ENCODE measurements at regions of chr2 and their contacts with region 1.

Region 1: GRCh38 chr2:109333414-109334210 is 204.6 kb downstream of the SH3RF3 start:
- DNase-seq: no peak
- ATAC-seq: 0 out of 2 replicates have a peak, but pooled peaks have one; percentile 47
- H3K4me3 ChIP-seq: no peak overlapping the region
- H3K27ac ChIP-seq: no peak overlapping the region
- H3K4me1 ChIP-seq: peaks cover 12% of the 10 kb centered on the region
- H3K27me3 ChIP-seq: no peaks in the 10 kb centered on the region
- CTCF ChIP-seq: no peak; the same call in 1 of the 2 replicates

Region 2: GRCh38 chr2:109322641-109323040 is 11.0 kb before region 1 on chr2:
- CTCF ChIA-PET with region 1: no interaction called
- POLR2A ChIA-PET with region 1: interaction called, 16 read pairs
- in situ Hi-C with region 1: no loop called
- intact Hi-C with region 1: no loop called
- DNase-seq: no peak
- ATAC-seq: no peak
- H3K4me3 ChIP-seq: no peak overlapping the region
- H3K27ac ChIP-seq: no peak overlapping the region
- H3K4me1 ChIP-seq: no peaks in the 10 kb centered on the region; the same call in 1 of the 2 replicates
- H3K27me3 ChIP-seq: 0 out of 2 replicates have a peak, but pooled peaks cover 2% of the 10 kb centered on the region
- CTCF ChIP-seq: no peak

Region 3: GRCh38 chr2:110732422-110733413 is 1399.1 kb after region 1 on chr2 and contains the start of gene ACOXL:
- CTCF ChIA-PET with region 1: no interaction called
- POLR2A ChIA-PET with region 1: no interaction called
- in situ Hi-C with region 1: no loop called
- intact Hi-C with region 1: no loop called
- DNase-seq: no peak
- ATAC-seq: peak; percentile 78
- H3K4me3 ChIP-seq: peak within 1 kb of the TSS; percentile 45 to 46
- H3K27ac ChIP-seq: peak within 1 kb of the TSS; percentile 36; the same call in 1 of the 2 replicates
- H3K4me1 ChIP-seq: no peaks in the 10 kb centered on the region
- H3K27me3 ChIP-seq: peaks cover 17% of the 10 kb centered on the region
- CTCF ChIP-seq: no peak
- total RNA-seq, gene ACOXL: 4.9 TPM

Measured in Panc1 (cell line).